Vagina (tissue), 2 donors: ENCODE measurements at regions of chr4 and their contacts with region 1.

Region 1: DNA sequence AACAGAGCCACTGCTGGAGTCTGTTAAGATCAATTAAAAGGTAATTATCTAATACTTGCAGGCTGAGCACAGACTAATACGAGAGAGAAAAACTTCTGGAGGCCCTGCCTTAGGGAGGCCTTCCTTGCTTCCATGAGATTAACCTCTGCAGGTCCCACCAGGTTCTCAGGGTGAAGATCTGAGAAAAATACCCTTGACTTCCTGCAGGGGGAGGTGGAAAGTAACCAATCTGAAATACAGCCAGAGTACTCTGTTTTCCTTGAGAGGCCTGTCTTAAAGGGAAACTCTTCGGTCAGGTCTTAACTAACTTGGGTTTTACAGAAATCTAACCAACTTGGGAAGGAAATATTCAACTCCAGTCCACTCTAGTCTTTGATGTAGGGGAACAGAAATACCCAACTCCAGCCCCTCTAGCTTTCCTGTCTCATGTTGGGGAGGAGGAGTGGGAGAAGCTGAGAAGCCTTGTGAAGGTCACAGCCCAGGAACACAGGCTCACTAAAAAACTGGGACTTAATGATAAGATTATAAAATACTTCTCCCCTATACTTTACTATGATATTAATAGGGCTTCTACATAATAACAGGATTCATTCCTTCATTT is 77.1 kb downstream of the TBCK start:
- DNase-seq: no peak
- H3K4me3 ChIP-seq: no peak overlapping the region
- H3K27ac ChIP-seq: no peak overlapping the region
- H3K4me1 ChIP-seq: no peaks in the 10 kb centered on the region
- H3K27me3 ChIP-seq: no peaks in the 10 kb centered on the region
- CTCF ChIP-seq: peak in 1 of 3 experiments; percentile 31
- POLR2A ChIP-seq: no peak

Region 2: GRCh38 chr4:106256190-106256589 is 17.3 kb after region 1 on chr4:
- intact Hi-C with region 1: loop called (anchors 1 kb)
- DNase-seq: no peak
- H3K4me3 ChIP-seq: no peak overlapping the region
- H3K27ac ChIP-seq: no peak overlapping the region
- H3K4me1 ChIP-seq: no peaks in the 10 kb centered on the region
- H3K27me3 ChIP-seq: no peaks in the 10 kb centered on the region
- CTCF ChIP-seq: no peak
- POLR2A ChIP-seq: no peak